Naive thymus-derived CD4-positive, alpha-beta T cell (primary cell): ENCODE measurements at regions of chr17 and their contacts with region 1.

Region 1: DNA sequence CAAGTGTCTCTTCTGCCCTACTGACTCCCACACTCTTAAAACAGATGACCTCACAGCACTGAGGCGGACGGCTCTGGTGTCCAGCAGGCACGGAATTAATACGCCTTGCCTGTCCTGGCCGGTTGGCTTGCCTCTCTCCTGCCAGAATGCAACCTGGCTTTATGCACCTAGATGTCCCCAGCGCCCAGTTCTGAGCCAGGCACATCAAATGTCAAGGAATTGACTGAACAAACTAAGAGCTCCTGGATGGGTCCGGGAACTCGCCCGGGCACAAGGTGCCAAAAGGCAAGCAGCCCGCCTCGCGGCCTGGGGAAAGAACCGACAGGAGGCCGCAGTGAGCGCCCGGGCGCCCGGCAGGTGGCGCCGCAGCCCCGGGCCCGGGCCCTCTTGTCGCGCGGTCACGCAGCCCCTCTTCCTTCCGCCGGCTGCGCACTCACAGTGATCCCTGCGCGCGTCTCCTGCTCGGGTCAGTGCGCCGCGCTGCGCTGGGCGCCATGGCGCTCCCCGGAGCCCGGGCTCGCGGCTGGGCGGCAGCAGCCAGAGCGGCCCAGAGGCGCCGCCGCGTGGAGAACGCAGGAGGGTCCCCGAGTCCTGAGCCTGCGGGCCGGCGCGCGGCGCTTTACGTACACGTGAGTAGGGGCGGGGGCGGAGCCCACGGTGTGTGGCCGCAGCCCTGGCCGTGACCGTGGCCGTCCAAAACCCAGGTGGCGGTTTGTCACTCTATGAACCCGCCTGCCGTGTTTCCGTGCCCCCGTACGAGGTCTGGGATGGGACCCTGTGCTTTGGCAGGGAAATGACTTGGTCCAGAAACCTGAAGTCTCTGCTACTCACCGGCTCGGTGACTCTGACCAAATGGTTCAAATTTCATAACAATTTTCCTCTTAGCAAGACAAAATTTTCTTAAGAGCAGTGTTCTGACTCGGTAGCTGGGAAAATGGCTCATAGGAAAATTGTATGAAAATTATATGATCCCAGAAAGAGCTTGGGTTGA is at the start of gene RSAD1:
- DNase-seq: peak; percentile 72 to 84 (median 79)
- ATAC-seq: peak; percentile 95
- H3K4me3 ChIP-seq: peak within 1 kb of the TSS; percentile 98
- H3K4me3 Mint-ChIP-seq: peak within 1 kb of the TSS; percentile 79 to 93 (median 90)
- H3K27ac ChIP-seq: peak within 1 kb of the TSS; percentile 75
- H3K27ac Mint-ChIP-seq: peak within 1 kb of the TSS; percentile 68 to 96 (median 92)
- H3K4me1 ChIP-seq: peaks cover 11 to 12% of the 10 kb centered on the region in 2 donors
- H3K4me1 Mint-ChIP-seq: peaks cover 19 to 28% (median 23%) of the 10 kb centered on the region in 7 donors
- H3K27me3 ChIP-seq: no peaks in the 10 kb centered on the region
- H3K27me3 Mint-ChIP-seq: peaks cover 0 to 6% (median 0%) of the 10 kb centered on the region in 5 donors
- total RNA-seq, gene RSAD1: 38.3 to 91.0 (median 54.6) TPM

Region 2: GRCh38 chr17:50200457-50201275 is 278.0 kb before region 1 on chr17:
- CTCF ChIA-PET with region 1: no interaction called
- POLR2A ChIA-PET with region 1: no interaction called
- intact Hi-C with region 1: loop called in 1 of 2 experiments (anchors 2 kb)
- DNase-seq: peak; percentile 66 to 84 (median 78)
- ATAC-seq: peak; percentile 80
- H3K4me3 ChIP-seq: peak overlapping the region; percentile 61
- H3K4me3 Mint-ChIP-seq: peak overlapping the region; percentile 70 to 87 (median 76)
- H3K27ac ChIP-seq: peak overlapping the region; percentile 26
- H3K27ac Mint-ChIP-seq: peak overlapping the region in 7 of 9 donors; percentile 47 to 92 (median 87)
- H3K4me1 ChIP-seq: peaks cover 12% of the 10 kb centered on the region in 2 donors
- H3K4me1 Mint-ChIP-seq: peaks cover 6 to 27% (median 25%) of the 10 kb centered on the region in 7 donors
- H3K27me3 ChIP-seq: peaks cover 5 to 13% of the 10 kb centered on the region in 2 donors
- H3K27me3 Mint-ChIP-seq: peaks cover 43 to 70% (median 49%) of the 10 kb centered on the region in 5 donors

Region 3: GRCh38 chr17:50386510-50386909 is 92.2 kb before region 1 on chr17:
- CTCF ChIA-PET with region 1: no interaction called
- POLR2A ChIA-PET with region 1: no interaction called
- intact Hi-C with region 1: no loop called
- DNase-seq: no peak
- ATAC-seq: no peak
- H3K4me3 ChIP-seq: no peak overlapping the region
- H3K4me3 Mint-ChIP-seq: no peak overlapping the region
- H3K27ac ChIP-seq: no peak overlapping the region
- H3K27ac Mint-ChIP-seq: peak overlapping the region in 1 of 9 donors; percentile 41
- H3K4me1 ChIP-seq: no peaks in the 10 kb centered on the region
- H3K4me1 Mint-ChIP-seq: peaks cover 0 to 8% (median 0%) of the 10 kb centered on the region in 7 donors
- H3K27me3 ChIP-seq: no peaks in the 10 kb centered on the region
- H3K27me3 Mint-ChIP-seq: no peaks in the 10 kb centered on the region

Region 4: GRCh38 chr17:50397111-50397918 is 81.4 kb before region 1 on chr17 and contains the start of gene LRRC59:
- CTCF ChIA-PET with region 1: interaction called, 8 read pairs
- POLR2A ChIA-PET with region 1: interaction called, 6 read pairs
- intact Hi-C with region 1: loop called (anchors 1 kb)
- DNase-seq: peak; percentile 86 to 99 (median 93)
- ATAC-seq: peak; percentile 100
- H3K4me3 ChIP-seq: peak within 1 kb of the TSS; percentile 69
- H3K4me3 Mint-ChIP-seq: peak within 1 kb of the TSS; percentile 78 to 99 (median 92)
- H3K27ac ChIP-seq: peak within 1 kb of the TSS; percentile 93
- H3K27ac Mint-ChIP-seq: peak within 1 kb of the TSS; percentile 83 to 96 (median 93)
- H3K4me1 ChIP-seq: peaks cover 15 to 18% of the 10 kb centered on the region in 2 donors
- H3K4me1 Mint-ChIP-seq: peaks cover 21 to 47% (median 34%) of the 10 kb centered on the region in 7 donors
- H3K27me3 ChIP-seq: no peaks in the 10 kb centered on the region
- H3K27me3 Mint-ChIP-seq: no peaks in the 10 kb centered on the region
- total RNA-seq, gene LRRC59: 27.6 to 67.1 (median 42.4) TPM

Region 5: GRCh38 chr17:50468409-50469207 is 10.1 kb before region 1 on chr17 and contains the start of gene CHAD:
- CTCF ChIA-PET with region 1: no interaction called
- POLR2A ChIA-PET with region 1: no interaction called
- intact Hi-C with region 1: no loop called
- DNase-seq: no peak
- ATAC-seq: peak; percentile 32
- H3K4me3 ChIP-seq: no peak within 1 kb of the TSS
- H3K4me3 Mint-ChIP-seq: peak within 1 kb of the TSS in 8 of 10 donors; percentile 49 to 80 (median 56)
- H3K27ac ChIP-seq: no peak within 1 kb of the TSS
- H3K27ac Mint-ChIP-seq: no peak within 1 kb of the TSS
- H3K4me1 ChIP-seq: no peaks in the 10 kb centered on the region
- H3K4me1 Mint-ChIP-seq: peaks cover 0 to 6% (median 4%) of the 10 kb centered on the region in 7 donors
- H3K27me3 ChIP-seq: peaks cover 0 to 7% of the 10 kb centered on the region in 2 donors
- H3K27me3 Mint-ChIP-seq: peaks cover 12 to 27% (median 17%) of the 10 kb centered on the region in 5 donors
- total RNA-seq, gene CHAD: not detected

Region 6: DNA sequence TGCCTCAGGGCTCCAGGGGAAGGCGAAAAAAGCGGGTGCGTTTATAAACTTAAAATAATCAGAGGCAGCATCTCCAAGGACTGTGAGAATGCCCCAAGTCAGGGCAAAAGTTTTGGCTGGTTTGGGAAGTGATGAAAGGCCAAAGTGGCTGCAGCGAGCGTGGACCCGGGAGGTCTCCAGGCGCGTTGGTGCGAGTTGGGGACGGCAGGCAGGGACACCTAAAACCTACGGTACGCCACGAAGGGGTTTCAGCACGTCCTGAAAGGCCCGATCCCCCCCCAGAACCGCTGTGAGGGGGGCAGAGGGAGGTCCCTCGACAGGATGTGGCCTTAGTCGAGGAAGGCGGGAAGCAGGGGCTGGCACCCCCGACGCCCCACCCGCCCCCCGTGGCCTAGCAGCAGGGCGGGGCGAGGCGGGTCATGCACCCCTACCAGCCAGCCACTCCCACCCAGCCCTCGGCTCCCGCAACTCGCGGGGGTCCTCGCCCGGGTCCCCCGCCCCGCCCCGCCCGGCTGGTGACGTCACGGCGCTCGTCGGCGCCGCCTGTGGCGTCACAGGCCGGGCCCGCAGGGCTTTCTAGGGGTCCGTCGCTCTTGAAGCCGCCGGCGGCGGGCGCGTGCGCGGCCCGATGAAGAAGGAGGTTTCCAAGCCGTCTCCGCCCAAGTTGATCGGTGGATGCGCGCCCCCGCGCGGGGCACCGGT is 29.3 kb after region 1 on chr17 and contains the start of gene MYCBPAP:
- CTCF ChIA-PET with region 1: interaction called, 6 read pairs
- POLR2A ChIA-PET with region 1: interaction called, 4 read pairs
- intact Hi-C with region 1: loop called (anchors 1 kb)
- DNase-seq: peak; percentile 64 to 85 (median 71)
- ATAC-seq: peak; percentile 88
- H3K4me3 ChIP-seq: peak within 1 kb of the TSS; percentile 71
- H3K4me3 Mint-ChIP-seq: peak within 1 kb of the TSS; percentile 84 to 96 (median 93)
- H3K27ac ChIP-seq: peak within 1 kb of the TSS; percentile 75
- H3K27ac Mint-ChIP-seq: peak within 1 kb of the TSS; percentile 88 to 97 (median 94)
- H3K4me1 ChIP-seq: peaks cover 10 to 14% of the 10 kb centered on the region in 2 donors
- H3K4me1 Mint-ChIP-seq: peaks cover 0 to 52% (median 40%) of the 10 kb centered on the region in 7 donors
- H3K27me3 ChIP-seq: no peaks in the 10 kb centered on the region
- H3K27me3 Mint-ChIP-seq: peaks cover 0 to 9% (median 0%) of the 10 kb centered on the region in 5 donors
- total RNA-seq, gene MYCBPAP: 0.90 to 9.0 (median 8.6) TPM

Region 7: GRCh38 chr17:50560185-50560824 is 81.6 kb after region 1 on chr17 and contains the start of gene CACNA1G:
- CTCF ChIA-PET with region 1: no interaction called
- POLR2A ChIA-PET with region 1: no interaction called
- intact Hi-C with region 1: loop called (anchors 5 kb)
- DNase-seq: peak; percentile 72 to 93 (median 81)
- ATAC-seq: peak; percentile 94
- H3K4me3 ChIP-seq: peak within 1 kb of the TSS; percentile 73
- H3K4me3 Mint-ChIP-seq: peak within 1 kb of the TSS; percentile 68 to 87 (median 80)
- H3K27ac ChIP-seq: no peak within 1 kb of the TSS
- H3K27ac Mint-ChIP-seq: peak within 1 kb of the TSS in 3 of 9 donors; percentile 13 to 28 (median 25)
- H3K4me1 ChIP-seq: peaks cover 20 to 23% of the 10 kb centered on the region in 2 donors
- H3K4me1 Mint-ChIP-seq: peaks cover 12 to 37% (median 21%) of the 10 kb centered on the region in 7 donors
- H3K27me3 ChIP-seq: peaks cover 19 to 27% of the 10 kb centered on the region in 2 donors
- H3K27me3 Mint-ChIP-seq: peaks cover 38 to 71% (median 46%) of the 10 kb centered on the region in 5 donors
- total RNA-seq, gene CACNA1G: not detected

Region 8: GRCh38 chr17:50707289-50708049 is 228.8 kb after region 1 on chr17 and contains the start of gene ANKRD40:
- CTCF ChIA-PET with region 1: no interaction called
- POLR2A ChIA-PET with region 1: no interaction called
- intact Hi-C with region 1: loop called in 1 of 2 experiments (anchors 5 kb)
- DNase-seq: peak; percentile 87 to 95 (median 91)
- ATAC-seq: peak; percentile 94
- H3K4me3 ChIP-seq: peak within 1 kb of the TSS; percentile 79
- H3K4me3 Mint-ChIP-seq: peak within 1 kb of the TSS; percentile 88 to 97 (median 93)
- H3K27ac ChIP-seq: peak within 1 kb of the TSS; percentile 88
- H3K27ac Mint-ChIP-seq: peak within 1 kb of the TSS; percentile 93 to 99 (median 97)
- H3K4me1 ChIP-seq: peaks cover 13 to 20% of the 10 kb centered on the region in 2 donors
- H3K4me1 Mint-ChIP-seq: peaks cover 23 to 68% (median 47%) of the 10 kb centered on the region in 7 donors
- H3K27me3 ChIP-seq: no peaks in the 10 kb centered on the region
- H3K27me3 Mint-ChIP-seq: peaks cover 0 to 2% (median 0%) of the 10 kb centered on the region in 5 donors
- total RNA-seq, gene ANKRD40: 27.4 to 37.2 (median 33.4) TPM

Region 9: GRCh38 chr17:50908860-50909764 is 430.4 kb after region 1 on chr17:
- CTCF ChIA-PET with region 1: no interaction called
- POLR2A ChIA-PET with region 1: no interaction called
- intact Hi-C with region 1: no loop called
- DNase-seq: peak in 7 of 9 donors; percentile 61 to 83 (median 70)
- ATAC-seq: peak; percentile 64
- H3K4me3 ChIP-seq: no peak overlapping the region
- H3K4me3 Mint-ChIP-seq: peak overlapping the region in 9 of 10 donors; percentile 56 to 84 (median 66)
- H3K27ac ChIP-seq: peak overlapping the region; percentile 75
- H3K27ac Mint-ChIP-seq: peak overlapping the region; percentile 87 to 99 (median 98)
- H3K4me1 ChIP-seq: peaks cover 55 to 66% of the 10 kb centered on the region in 2 donors
- H3K4me1 Mint-ChIP-seq: peaks cover 38 to 72% (median 63%) of the 10 kb centered on the region in 7 donors
- H3K27me3 ChIP-seq: no peaks in the 10 kb centered on the region
- H3K27me3 Mint-ChIP-seq: peaks cover 0 to 2% (median 0%) of the 10 kb centered on the region in 5 donors